T-cell (primary cell): ENCODE measurements at regions of chr19 and their contacts with region 1.

Region 1: GRCh38 chr19:47514869-47515588 is at the start of gene NAPA:
- DNase-seq: peak; percentile 100
- ATAC-seq: peak; percentile 90 to 95 (median 92)
- H3K4me3 ChIP-seq: peak within 1 kb of the TSS; percentile 94 to 99
- H3K4me3 Mint-ChIP-seq: peak within 1 kb of the TSS; percentile 99
- H3K27ac ChIP-seq: peak within 1 kb of the TSS; percentile 92
- H3K27ac Mint-ChIP-seq: peak within 1 kb of the TSS; percentile 97 to 98
- H3K4me1 ChIP-seq: peaks cover 39 to 79% of the 10 kb centered on the region in 2 experiments
- H3K4me1 Mint-ChIP-seq: peaks cover 83 to 93% (median 90%) of the 10 kb centered on the region in 3 donors
- H3K27me3 ChIP-seq: no peaks in the 10 kb centered on the region
- H3K27me3 Mint-ChIP-seq: no peaks in the 10 kb centered on the region
- total RNA-seq, gene NAPA: 81.1 to 119 (median 86.7) TPM

Region 2: GRCh38 chr19:47330466-47330869 is 184.6 kb before region 1 on chr19:
- CTCF ChIA-PET with region 1: no interaction called
- POLR2A ChIA-PET with region 1: no interaction called
- DNase-seq: no peak
- ATAC-seq: no peak
- H3K4me3 ChIP-seq: no peak overlapping the region
- H3K4me3 Mint-ChIP-seq: no peak overlapping the region
- H3K27ac ChIP-seq: no peak overlapping the region
- H3K27ac Mint-ChIP-seq: no peak overlapping the region
- H3K4me1 ChIP-seq: peaks cover 0 to 2% of the 10 kb centered on the region in 2 experiments
- H3K4me1 Mint-ChIP-seq: peaks cover 0 to 6% (median 0%) of the 10 kb centered on the region in 3 donors
- H3K27me3 ChIP-seq: peaks cover 0 to 11% of the 10 kb centered on the region in 2 experiments
- H3K27me3 Mint-ChIP-seq: peaks cover 5 to 6% of the 10 kb centered on the region in 2 donors

Region 3: DNA sequence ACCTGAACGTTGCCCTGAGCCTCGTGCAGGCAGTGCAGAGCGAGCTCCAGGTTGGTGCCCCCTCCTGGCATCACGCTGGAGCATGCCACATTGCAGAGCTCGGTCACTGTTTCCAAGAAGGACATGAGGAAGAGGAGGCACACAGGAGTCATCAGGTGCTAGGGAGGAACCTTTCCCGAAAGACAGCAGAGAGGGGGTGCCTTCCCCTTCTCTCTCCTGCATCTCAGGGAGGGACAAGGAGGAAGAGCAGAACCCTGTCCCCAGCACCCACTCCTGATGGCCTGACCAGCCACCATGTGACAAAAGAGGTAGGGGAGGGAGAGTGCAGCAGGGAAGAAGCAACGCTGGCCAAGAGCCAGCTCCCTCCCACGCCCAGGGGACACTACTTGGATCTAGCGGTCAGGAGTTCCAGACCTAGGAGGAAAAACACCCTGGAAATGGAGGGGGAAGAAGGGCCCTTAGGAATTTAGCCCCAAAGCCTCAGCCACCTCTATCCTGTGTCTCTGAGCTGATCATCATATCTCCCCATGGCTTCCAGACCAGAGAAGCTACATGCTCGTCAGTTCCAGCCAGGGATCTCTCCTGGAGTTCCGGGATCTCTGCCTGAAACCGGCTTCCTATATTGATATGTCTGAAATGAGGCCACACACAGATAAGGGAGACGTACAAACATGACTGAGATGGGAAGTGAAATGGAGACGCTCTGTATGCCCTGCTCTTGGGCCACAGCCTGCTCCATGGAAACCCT is 16.8 kb after region 1 on chr19:
- CTCF ChIA-PET with region 1: interaction called in 1 of 2 experiments, 3 read pairs
- POLR2A ChIA-PET with region 1: interaction called in 1 of 2 experiments, 10 read pairs
- DNase-seq: no peak
- ATAC-seq: no peak
- H3K4me3 ChIP-seq: no peak overlapping the region
- H3K4me3 Mint-ChIP-seq: no peak overlapping the region
- H3K27ac ChIP-seq: no peak overlapping the region
- H3K27ac Mint-ChIP-seq: no peak overlapping the region
- H3K4me1 ChIP-seq: no peaks in the 10 kb centered on the region
- H3K4me1 Mint-ChIP-seq: no peaks in the 10 kb centered on the region
- H3K27me3 ChIP-seq: peaks cover 0 to 8% of the 10 kb centered on the region in 2 experiments
- H3K27me3 Mint-ChIP-seq: no peaks in the 10 kb centered on the region